CD4-positive, alpha-beta T cell (primary cell): ENCODE measurements at regions of chr2 and their contacts with region 1.

Region 1: DNA sequence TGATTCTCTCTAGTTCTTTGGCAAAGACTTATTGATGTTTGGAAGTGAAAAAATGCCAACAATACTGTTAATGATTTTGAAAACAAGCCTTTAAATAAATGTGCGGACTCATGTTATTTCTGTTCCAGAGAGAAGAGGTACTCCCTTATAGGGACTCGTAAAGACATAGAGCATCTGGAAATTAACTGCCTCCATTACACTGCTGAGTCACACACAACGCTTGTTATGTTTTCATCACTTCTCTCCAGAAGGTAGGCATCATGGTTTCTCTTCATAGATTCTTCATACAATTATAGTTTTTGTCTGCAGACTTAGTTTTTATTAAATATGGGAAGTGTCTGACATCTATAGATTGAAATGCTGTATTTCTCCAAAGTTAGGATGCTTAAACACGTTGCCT is 302.5 kb upstream of the EPC2 start:
- DNase-seq: no peak
- ATAC-seq: no peak
- H3K4me3 ChIP-seq: no peak overlapping the region
- H3K4me3 Mint-ChIP-seq: no peak overlapping the region
- H3K27ac ChIP-seq: no peak overlapping the region
- H3K27ac Mint-ChIP-seq: no peak overlapping the region
- H3K4me1 ChIP-seq: no peaks in the 10 kb centered on the region
- H3K4me1 Mint-ChIP-seq: no peaks in the 10 kb centered on the region
- H3K27me3 ChIP-seq: no peaks in the 10 kb centered on the region
- H3K27me3 Mint-ChIP-seq: no peaks in the 10 kb centered on the region
- CTCF ChIP-seq: no peak

Region 2: GRCh38 chr2:150191349-150191748 is 1849.3 kb after region 1 on chr2:
- CTCF ChIA-PET with region 1: no interaction called
- POLR2A ChIA-PET with region 1: no interaction called
- intact Hi-C with region 1: loop called in 1 of 2 experiments (anchors 5 kb)
- DNase-seq: no peak
- ATAC-seq: no peak
- H3K4me3 ChIP-seq: no peak overlapping the region
- H3K4me3 Mint-ChIP-seq: no peak overlapping the region
- H3K27ac ChIP-seq: no peak overlapping the region
- H3K27ac Mint-ChIP-seq: no peak overlapping the region
- H3K4me1 ChIP-seq: no peaks in the 10 kb centered on the region
- H3K4me1 Mint-ChIP-seq: no peaks in the 10 kb centered on the region
- H3K27me3 ChIP-seq: no peaks in the 10 kb centered on the region
- H3K27me3 Mint-ChIP-seq: no peaks in the 10 kb centered on the region
- CTCF ChIP-seq: no peak